ENCODE measurements at regions of chr11 and their contacts with region 1.

Region 1: DNA sequence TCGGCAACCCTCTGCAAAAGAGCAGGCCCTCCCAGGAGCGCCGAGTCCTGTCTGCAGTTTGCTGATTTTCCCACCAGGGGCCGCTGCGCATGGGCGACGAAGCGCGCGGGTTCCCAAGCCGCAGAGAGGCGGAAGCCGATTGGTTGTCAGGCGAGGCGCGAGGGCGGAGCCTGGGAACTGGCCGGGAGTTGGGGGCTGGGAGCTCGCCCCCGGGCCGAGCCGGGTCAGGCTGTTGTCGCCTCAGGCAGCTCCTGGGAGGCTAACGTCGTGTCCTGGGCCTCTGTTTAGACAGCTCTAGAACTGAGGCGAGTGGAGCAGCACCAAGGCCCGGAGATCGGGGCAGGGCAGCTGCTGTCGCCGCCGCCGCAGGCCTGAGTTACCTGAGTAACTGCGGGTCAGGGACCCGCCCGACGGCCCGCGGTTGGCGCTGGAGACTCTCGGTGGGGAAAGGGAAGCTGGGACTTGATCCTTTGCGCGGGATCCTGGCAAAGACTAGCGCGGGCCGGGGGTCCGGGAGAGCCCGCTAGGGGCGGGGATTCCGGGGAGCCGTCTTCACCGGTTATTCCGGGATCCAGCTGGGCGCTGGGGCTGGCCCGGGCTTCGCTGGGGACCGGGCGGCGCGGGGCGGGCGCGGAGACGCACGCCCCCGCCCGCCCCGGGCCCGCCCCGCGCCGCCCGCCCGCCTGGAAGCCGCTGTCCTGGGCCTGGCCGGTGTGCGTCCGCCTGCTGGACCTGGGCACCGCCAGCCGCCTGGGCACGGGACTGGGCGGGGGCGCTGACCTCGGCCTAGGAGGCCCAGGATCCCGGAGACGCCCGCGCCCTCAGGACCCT is at the start of gene STIM1:
- DNase-seq: peak; percentile 91 to 93 (median 92)
- H3K4me3 ChIP-seq: peak within 1 kb of the TSS; percentile 65 to 94 (median 87)
- H3K4me3 Mint-ChIP-seq: peak within 1 kb of the TSS; percentile 96 to 97
- H3K27ac ChIP-seq: peak within 1 kb of the TSS; percentile 94
- H3K27ac Mint-ChIP-seq: peak within 1 kb of the TSS; percentile 96 to 99 (median 98)
- H3K4me1 ChIP-seq: peaks cover 51 to 62% of the 10 kb centered on the region in 2 donors
- H3K4me1 Mint-ChIP-seq: peaks cover 57% of the 10 kb centered on the region
- H3K27me3 ChIP-seq: no peaks in the 10 kb centered on the region
- H3K27me3 Mint-ChIP-seq: peaks cover 0 to 2% (median 0%) of the 10 kb centered on the region in 3 donors
- CTCF ChIP-seq: peak; percentile 97
- polyA plus RNA-seq, gene STIM1: 14.0 to 68.6 (median 21.0) TPM

Region 2: GRCh38 chr11:3834664-3835461 is 20.3 kb before region 1 on chr11:
- intact Hi-C with region 1: loop called in 1 of 2 experiments (anchors 2 kb)
- DNase-seq: peak; percentile 75 to 82 (median 80)
- H3K4me3 ChIP-seq: peak overlapping the region; percentile 29 to 100 (median 52)
- H3K4me3 Mint-ChIP-seq: peak overlapping the region; percentile 96 to 98
- H3K27ac ChIP-seq: peak overlapping the region; percentile 87 to 97
- H3K27ac Mint-ChIP-seq: peak overlapping the region; percentile 92 to 99 (median 95)
- H3K4me1 ChIP-seq: peaks cover 90 to 98% of the 10 kb centered on the region in 2 donors
- H3K4me1 Mint-ChIP-seq: peaks cover 97% of the 10 kb centered on the region
- H3K27me3 ChIP-seq: no peaks in the 10 kb centered on the region
- H3K27me3 Mint-ChIP-seq: no peaks in the 10 kb centered on the region
- CTCF ChIP-seq: no peak

Region 3: DNA sequence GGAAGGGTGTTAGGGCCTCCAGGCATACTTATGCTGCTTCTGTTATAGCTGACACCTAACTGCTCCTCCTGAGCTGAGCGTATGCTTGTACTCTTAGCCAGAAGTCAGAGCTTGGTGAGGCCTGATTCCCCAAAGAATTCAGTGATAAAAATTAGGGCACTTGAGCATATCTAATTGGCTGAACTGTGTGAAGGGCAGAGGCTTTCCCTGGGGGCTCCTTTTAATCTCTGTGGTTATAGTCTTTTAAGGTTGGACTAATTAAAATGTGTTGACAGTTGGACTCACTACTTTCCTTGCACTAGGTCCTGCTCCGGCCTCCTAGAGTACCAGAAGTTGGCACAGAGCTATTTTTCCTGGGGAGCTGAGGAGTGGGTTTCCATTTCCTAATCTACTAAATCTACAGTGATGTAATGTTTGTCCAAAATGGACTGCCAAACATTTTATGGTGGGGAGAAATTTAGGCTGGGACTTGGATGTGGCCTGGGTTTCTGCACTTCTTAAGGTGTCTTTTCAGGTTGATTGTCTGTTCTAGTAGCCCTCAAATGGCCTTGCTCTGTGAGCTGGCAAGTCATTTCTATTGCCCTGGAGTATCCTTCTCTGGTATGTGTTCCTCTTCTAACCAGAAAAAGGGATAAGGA is 18.6 kb after region 1 on chr11:
- intact Hi-C with region 1: loop called in 1 of 2 experiments (anchors 2 kb)
- DNase-seq: no peak
- H3K4me3 ChIP-seq: no peak overlapping the region
- H3K4me3 Mint-ChIP-seq: no peak overlapping the region
- H3K27ac ChIP-seq: no peak overlapping the region
- H3K27ac Mint-ChIP-seq: peak overlapping the region in 3 of 7 donors; percentile 32 to 67 (median 33)
- H3K4me1 ChIP-seq: peaks cover 23 to 39% of the 10 kb centered on the region in 2 donors
- H3K4me1 Mint-ChIP-seq: peaks cover 62% of the 10 kb centered on the region
- H3K27me3 ChIP-seq: no peaks in the 10 kb centered on the region
- H3K27me3 Mint-ChIP-seq: peaks cover 0 to 3% (median 3%) of the 10 kb centered on the region in 3 donors
- CTCF ChIP-seq: no peak

Region 4: DNA sequence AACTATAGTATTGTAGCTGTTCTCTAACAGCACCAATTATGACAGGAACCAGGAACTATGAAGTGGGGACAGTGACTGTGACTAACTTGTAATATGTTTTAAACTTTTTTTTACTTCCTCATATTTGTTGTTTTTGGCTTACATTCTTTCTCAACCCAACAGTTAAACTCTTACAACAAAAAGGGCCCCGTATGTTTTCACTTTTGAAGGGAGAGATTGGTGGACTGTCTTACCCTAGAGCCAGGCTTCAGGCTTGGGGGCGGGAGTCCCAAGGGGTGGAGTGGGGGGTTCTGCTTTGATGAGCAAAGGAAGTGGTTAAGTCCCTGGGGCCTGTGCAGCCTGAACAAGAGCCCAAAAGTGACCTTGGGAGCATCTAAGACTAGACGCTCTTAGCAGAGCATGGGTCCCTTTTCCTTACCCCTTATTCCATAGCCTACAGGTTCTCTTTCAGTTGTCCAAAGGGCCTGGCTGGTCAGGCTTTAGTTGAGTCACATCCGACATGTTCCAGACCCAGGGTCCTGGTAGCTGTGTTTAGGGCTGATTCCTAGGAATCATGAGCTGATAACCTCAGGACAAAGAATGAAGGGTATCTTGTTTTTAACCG is 39.0 kb after region 1 on chr11:
- intact Hi-C with region 1: loop called in 1 of 2 experiments (anchors 5 kb)
- DNase-seq: peak; percentile 67 to 87 (median 74)
- H3K4me3 ChIP-seq: peak overlapping the region in 1 of 3 experiments; percentile 59
- H3K4me3 Mint-ChIP-seq: peak overlapping the region; percentile 66 to 82
- H3K27ac ChIP-seq: peak overlapping the region; percentile 93 to 98
- H3K27ac Mint-ChIP-seq: peak overlapping the region; percentile 95 to 99 (median 99)
- H3K4me1 ChIP-seq: peaks cover 45 to 49% of the 10 kb centered on the region in 2 donors
- H3K4me1 Mint-ChIP-seq: peaks cover 57% of the 10 kb centered on the region
- H3K27me3 ChIP-seq: no peaks in the 10 kb centered on the region
- H3K27me3 Mint-ChIP-seq: no peaks in the 10 kb centered on the region
- CTCF ChIP-seq: no peak

Region 5: GRCh38 chr11:3903207-3903896 is 48.2 kb after region 1 on chr11:
- intact Hi-C with region 1: loop called in 1 of 2 experiments (anchors 5 kb)
- DNase-seq: peak in 1 of 3 donors; percentile 57
- H3K4me3 ChIP-seq: peak overlapping the region in 1 of 3 experiments; percentile 7
- H3K4me3 Mint-ChIP-seq: peak overlapping the region in 1 of 2 donors; percentile 23
- H3K27ac ChIP-seq: peak overlapping the region; percentile 35 to 79
- H3K27ac Mint-ChIP-seq: peak overlapping the region; percentile 91 to 98 (median 94)
- H3K4me1 ChIP-seq: peaks cover 68 to 71% of the 10 kb centered on the region in 2 donors
- H3K4me1 Mint-ChIP-seq: peaks cover 72% of the 10 kb centered on the region
- H3K27me3 ChIP-seq: no peaks in the 10 kb centered on the region
- H3K27me3 Mint-ChIP-seq: no peaks in the 10 kb centered on the region
- CTCF ChIP-seq: no peak

Region 6: GRCh38 chr11:3962406-3962840 is 107.2 kb after region 1 on chr11:
- intact Hi-C with region 1: loop called in 1 of 2 experiments (anchors 5 kb)
- DNase-seq: no peak
- H3K4me3 ChIP-seq: no peak overlapping the region
- H3K4me3 Mint-ChIP-seq: no peak overlapping the region
- H3K27ac ChIP-seq: no peak overlapping the region
- H3K27ac Mint-ChIP-seq: no peak overlapping the region
- H3K4me1 ChIP-seq: no peaks in the 10 kb centered on the region
- H3K4me1 Mint-ChIP-seq: peaks cover 13% of the 10 kb centered on the region
- H3K27me3 ChIP-seq: no peaks in the 10 kb centered on the region
- H3K27me3 Mint-ChIP-seq: no peaks in the 10 kb centered on the region
- CTCF ChIP-seq: no peak